ENCODE measurements at regions of chr2 and their contacts with region 1.

Region 1: DNA sequence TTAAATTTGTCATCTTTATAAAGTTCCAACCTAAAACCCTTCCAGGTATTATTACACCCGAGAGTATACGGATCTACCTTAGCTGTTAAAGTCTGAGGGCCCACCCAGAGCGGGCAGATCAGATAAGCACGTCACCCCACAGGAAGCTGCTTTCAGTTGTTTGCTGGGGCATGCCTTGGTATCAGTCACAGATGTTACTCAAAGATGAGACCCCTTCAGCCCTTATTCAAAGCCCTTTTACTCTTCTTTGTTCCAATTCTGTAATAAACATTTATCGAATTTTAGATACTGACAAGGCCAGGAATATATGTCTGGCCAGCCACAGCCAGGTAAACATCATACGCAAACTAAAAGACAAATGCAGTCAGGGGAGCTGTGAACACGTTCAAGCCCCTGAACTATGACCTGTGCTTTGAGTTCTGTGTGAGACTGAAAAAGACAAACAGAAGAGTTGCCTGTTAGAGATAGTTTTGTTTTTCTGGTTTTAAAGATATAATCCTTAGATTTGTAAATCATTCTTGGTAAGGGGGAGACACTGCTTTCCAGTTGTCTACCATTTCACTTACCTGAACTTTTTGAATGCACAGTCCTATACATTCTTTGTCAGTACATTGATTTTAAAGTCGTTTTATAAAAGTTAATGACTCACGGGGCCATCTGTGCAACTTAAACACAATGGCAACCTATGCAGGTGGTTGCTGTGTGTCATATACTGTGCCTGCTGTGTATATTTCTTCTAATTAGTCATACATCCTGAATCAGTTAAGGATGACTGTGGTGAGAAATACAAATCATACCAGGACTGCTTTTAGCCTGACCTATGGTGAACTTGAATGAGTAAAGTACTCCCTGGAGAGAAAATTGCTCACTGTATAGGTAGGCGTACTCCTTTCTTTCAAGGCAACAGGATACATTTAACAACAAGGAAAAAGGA is 100.5 kb upstream of the ITPRID2 start:
- DNase-seq: peak; percentile 3
- H3K4me3 Mint-ChIP-seq: no peak overlapping the region
- H3K27ac Mint-ChIP-seq: peak overlapping the region; percentile 38
- H3K4me1 Mint-ChIP-seq: peaks cover 33% of the 10 kb centered on the region
- H3K27me3 Mint-ChIP-seq: no peaks in the 10 kb centered on the region

Region 2: GRCh38 chr2:181810823-181811695 is 20.1 kb after region 1 on chr2:
- intact Hi-C with region 1: loop called (anchors 2 kb)
- DNase-seq: no peak
- H3K4me3 Mint-ChIP-seq: no peak overlapping the region
- H3K27ac Mint-ChIP-seq: no peak overlapping the region
- H3K4me1 Mint-ChIP-seq: peaks cover 15% of the 10 kb centered on the region
- H3K27me3 Mint-ChIP-seq: no peaks in the 10 kb centered on the region

Region 3: GRCh38 chr2:181946498-181947127 is 155.6 kb after region 1 on chr2:
- intact Hi-C with region 1: loop called (anchors 1 kb)
- DNase-seq: no peak
- H3K4me3 Mint-ChIP-seq: no peak overlapping the region
- H3K27ac Mint-ChIP-seq: no peak overlapping the region
- H3K4me1 Mint-ChIP-seq: no peaks in the 10 kb centered on the region
- H3K27me3 Mint-ChIP-seq: peaks cover 29% of the 10 kb centered on the region

Measured in activated T-helper 1 cell treated with anti-CD3 and anti-CD28 coated beads, Interleukin-12 subunit alpha, Interleukin-12 subunit beta, Interleukin-2, Interleukin-4 antibody, amounts not matched to agents 30 ng/mL and 10 ng/mL and 1 ng/mL, durations not matched to agents 14 hours and 24 hours and 36 hours (primary cell).